Gastrocnemius medialis (tissue), 4 donors: ENCODE measurements at regions of chr5 and their contacts with region 1.

Region 1: DNA sequence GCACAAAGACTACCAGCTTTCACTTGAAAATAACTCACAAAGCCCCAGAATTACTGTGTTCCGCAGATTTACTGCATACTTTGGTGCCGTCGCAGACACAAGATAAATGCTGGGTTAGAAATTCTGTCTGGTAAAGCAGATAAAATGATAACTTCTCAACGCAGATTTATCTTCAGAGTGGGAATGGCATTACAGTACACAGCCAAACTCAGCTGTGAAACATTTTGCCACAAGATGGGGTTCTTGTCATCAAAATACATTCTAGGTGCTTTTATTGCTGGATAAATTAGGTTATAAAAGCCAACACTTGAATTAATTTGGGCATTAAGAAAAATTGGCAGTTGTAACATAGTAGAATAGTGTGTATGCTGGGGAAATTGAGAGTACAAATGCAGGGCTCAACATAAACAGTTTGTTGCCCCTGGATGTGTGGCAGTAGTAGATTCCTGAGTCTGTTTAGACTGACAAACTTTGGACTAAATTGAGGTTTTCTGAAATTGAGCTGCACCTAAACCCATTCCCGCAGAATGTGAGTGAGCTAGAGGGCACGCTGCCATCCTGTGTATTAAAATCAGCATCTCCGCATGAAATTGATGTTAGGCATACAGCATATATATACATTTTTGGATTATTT is 61.1 kb downstream of the LMNB1 start:
- DNase-seq: no peak
- ATAC-seq: no peak
- H3K4me3 ChIP-seq: no peak overlapping the region
- H3K27ac ChIP-seq: no peak overlapping the region
- H3K4me1 ChIP-seq: no peaks in the 10 kb centered on the region
- H3K27me3 ChIP-seq: no peaks in the 10 kb centered on the region
- CTCF ChIP-seq: peak in 3 of 5 experiments; percentile 10 to 34 (median 27)
- POLR2A ChIP-seq: no peak

Region 2: GRCh38 chr5:127313847-127314473 is 475.9 kb after region 1 on chr5:
- in situ Hi-C with region 1: loop called in 1 of 4 experiments (anchors 25 kb)
- intact Hi-C with region 1: loop called (anchors 10 kb)
- DNase-seq: peak in 1 of 2 donors; percentile 27
- ATAC-seq: peak in 1 of 2 donors; percentile 36
- H3K4me3 ChIP-seq: no peak overlapping the region
- H3K27ac ChIP-seq: no peak overlapping the region
- H3K4me1 ChIP-seq: peaks cover 0 to 10% of the 10 kb centered on the region in 2 donors
- H3K27me3 ChIP-seq: no peaks in the 10 kb centered on the region
- CTCF ChIP-seq: peak; percentile 19 to 64 (median 57)
- POLR2A ChIP-seq: no peak